H1 (cell line): ENCODE measurements at regions of chr11 and their contacts with region 1.

Region 1: DNA sequence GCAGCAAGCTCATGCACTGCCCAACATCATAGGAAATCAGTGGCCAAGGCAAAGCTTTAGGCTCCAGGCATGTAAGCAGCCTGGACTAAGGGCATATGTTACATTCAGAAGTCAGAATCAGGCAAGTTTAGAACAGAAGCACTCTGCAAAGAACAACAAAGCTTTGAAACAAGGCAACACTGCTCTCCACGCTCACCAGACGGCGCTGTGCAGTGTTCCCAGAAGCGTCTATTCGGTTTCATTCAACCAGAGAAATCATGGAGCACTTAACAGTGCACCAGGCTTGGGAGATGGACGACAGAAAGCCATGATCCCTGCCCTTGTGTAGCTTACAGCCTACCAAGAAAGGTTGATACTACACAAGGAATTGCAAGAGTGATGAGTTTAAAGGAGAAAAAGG is 555.8 kb downstream of the BUD13 start:
- DNase-seq: no peak
- H3K4me3 ChIP-seq: no peak overlapping the region
- H3K27ac ChIP-seq: no peak overlapping the region
- H3K4me1 ChIP-seq: no peaks in the 10 kb centered on the region; a peak in 1 of 7 replicates
- H3K27me3 ChIP-seq: no peaks in the 10 kb centered on the region
- CTCF ChIP-seq: peak; percentile 44 to 74 (median 71)
- EP300 ChIP-seq: no peak
- POLR2A ChIP-seq: no peak
- RAD21 ChIP-seq: peak; percentile 52 to 59

Region 2: GRCh38 chr11:116170526-116171122 is 46.4 kb before region 1 on chr11:
- CTCF ChIA-PET with region 1: interaction called, 38 read pairs
- POLR2A ChIA-PET with region 1: no interaction called
- DNase-seq: peak in 1 of 2 experiments; percentile 53
- H3K4me3 ChIP-seq: no peak overlapping the region
- H3K27ac ChIP-seq: no peak overlapping the region
- H3K4me1 ChIP-seq: peaks cover 0 to 7% (median under 1%) of the 10 kb centered on the region in 4 experiments; a peak in 3 of 7 replicates
- H3K27me3 ChIP-seq: no peaks in the 10 kb centered on the region
- CTCF ChIP-seq: peak; percentile 62 to 74 (median 68)
- EP300 ChIP-seq: no peak
- POLR2A ChIP-seq: no peak
- RAD21 ChIP-seq: peak; percentile 50 to 66

Region 3: GRCh38 chr11:116187026-116187425 is 30.0 kb before region 1 on chr11:
- CTCF ChIA-PET with region 1: interaction called, 13 read pairs
- POLR2A ChIA-PET with region 1: interaction called, 4 read pairs
- DNase-seq: no peak
- H3K4me3 ChIP-seq: no peak overlapping the region
- H3K27ac ChIP-seq: no peak overlapping the region
- H3K4me1 ChIP-seq: peaks cover 2 to 9% (median 4%) of the 10 kb centered on the region in 4 experiments; a peak in 4 of 7 replicates
- H3K27me3 ChIP-seq: 0 out of 7 replicates have a peak, but pooled peaks cover 0 to 2% (median 0%) of the 10 kb centered on the region in 4 experiments
- CTCF ChIP-seq: no peak
- EP300 ChIP-seq: no peak
- POLR2A ChIP-seq: no peak
- RAD21 ChIP-seq: no peak

Region 4: DNA sequence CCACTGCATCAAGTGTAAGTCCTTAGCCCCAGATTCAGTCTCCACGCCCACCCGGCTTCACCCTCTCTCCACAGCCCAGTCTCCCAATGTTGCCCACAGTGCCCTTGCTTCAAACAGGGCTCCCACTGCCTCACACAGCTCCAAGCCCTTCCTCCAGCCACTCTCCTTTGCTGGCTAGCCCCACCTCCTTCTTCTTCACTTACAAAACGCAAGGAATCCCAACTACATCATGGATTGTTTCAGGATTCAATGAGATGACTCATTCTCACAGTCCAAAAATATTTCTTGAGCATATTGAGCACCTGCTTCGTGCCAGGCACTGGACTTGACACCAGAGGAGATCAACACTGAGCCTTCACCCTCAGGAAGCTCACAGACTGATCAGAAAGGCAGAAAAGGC is 22.2 kb after region 1 on chr11:
- CTCF ChIA-PET with region 1: interaction called, 162 read pairs
- POLR2A ChIA-PET with region 1: no interaction called
- DNase-seq: no peak
- H3K4me3 ChIP-seq: no peak overlapping the region
- H3K27ac ChIP-seq: no peak overlapping the region
- H3K4me1 ChIP-seq: peaks cover 0 to 7% (median 5%) of the 10 kb centered on the region in 4 experiments; a peak in 4 of 7 replicates
- H3K27me3 ChIP-seq: no peaks in the 10 kb centered on the region; a peak in 1 of 7 replicates
- CTCF ChIP-seq: no peak
- EP300 ChIP-seq: no peak
- POLR2A ChIP-seq: no peak
- RAD21 ChIP-seq: no peak

Region 5: DNA sequence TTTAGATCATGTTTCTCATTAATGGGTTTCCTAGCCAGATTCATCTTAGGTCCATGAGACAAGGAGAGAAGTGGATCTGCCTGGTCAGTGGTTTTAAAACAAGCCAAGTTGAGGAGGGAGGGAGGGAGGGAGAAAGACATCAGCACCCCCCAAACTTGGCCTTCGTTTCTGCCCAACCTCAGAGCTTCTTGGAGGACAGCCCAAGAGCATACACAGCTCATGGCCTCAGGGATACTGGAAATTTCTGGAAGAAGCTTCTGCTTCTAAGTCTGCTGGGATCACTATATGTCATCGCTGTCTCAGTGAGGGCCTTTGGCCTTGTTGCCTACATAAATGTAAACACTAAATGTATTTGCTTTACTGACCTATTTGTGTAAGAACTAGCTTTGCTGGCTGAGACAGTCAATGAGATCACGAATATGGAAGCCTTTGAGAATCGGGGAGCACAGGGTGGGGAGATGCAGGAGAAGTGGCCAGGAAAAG is 180.6 kb after region 1 on chr11:
- CTCF ChIA-PET with region 1: no interaction called
- POLR2A ChIA-PET with region 1: no interaction called
- DNase-seq: no peak
- H3K4me3 ChIP-seq: no peak overlapping the region
- H3K27ac ChIP-seq: no peak overlapping the region
- H3K4me1 ChIP-seq: peaks cover 0 to 7% (median 0%) of the 10 kb centered on the region in 4 experiments; a peak in 3 of 7 replicates
- H3K27me3 ChIP-seq: no peaks in the 10 kb centered on the region
- CTCF ChIP-seq: no peak
- EP300 ChIP-seq: no peak
- POLR2A ChIP-seq: no peak
- RAD21 ChIP-seq: no peak